Sciatic nerve (tissue), 2 donors: ENCODE measurements at regions of chr2 and their contacts with region 1.

Region 1: GRCh38 chr2:150466741-150467620 is 20.5 kb downstream of the RND3 start:
- DNase-seq: no peak
- ATAC-seq: peak; percentile 74

Region 2: GRCh38 chr2:150303281-150303680 is 163.7 kb before region 1 on chr2:
- intact Hi-C with region 1: no loop called
- DNase-seq: no peak
- ATAC-seq: no peak

Region 3: DNA sequence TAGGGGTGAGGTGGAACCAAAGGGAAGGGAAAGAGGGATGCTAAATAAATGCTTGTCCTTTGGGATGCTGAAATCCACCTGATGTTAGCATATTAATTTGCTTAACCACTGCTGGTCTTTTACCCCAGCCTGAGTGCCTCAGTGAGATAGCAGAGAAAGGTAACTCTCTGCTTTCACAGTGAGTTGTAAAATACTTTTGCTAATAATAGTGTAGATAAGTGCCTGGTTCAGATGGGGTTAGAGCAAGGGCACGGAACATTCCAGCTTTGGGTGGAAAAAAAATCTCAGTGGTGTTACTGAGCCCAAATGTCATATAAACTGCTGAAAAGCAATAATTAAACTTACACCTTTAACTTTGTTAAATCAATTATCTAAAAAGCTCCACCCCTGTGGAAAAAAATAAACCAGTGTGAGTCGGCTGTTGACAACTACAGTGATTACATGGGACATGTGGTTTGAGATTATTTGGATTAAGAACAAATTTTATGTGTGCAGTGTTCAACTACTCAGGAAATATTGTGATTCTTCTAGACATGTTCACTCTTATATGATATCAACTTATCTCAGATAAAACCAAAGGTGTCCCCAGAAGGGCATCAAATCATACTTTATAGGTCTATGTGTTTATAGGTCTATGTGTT is 41.6 kb after region 1 on chr2:
- intact Hi-C with region 1: loop called (anchors 2 kb)
- DNase-seq: no peak
- ATAC-seq: no peak

Region 4: DNA sequence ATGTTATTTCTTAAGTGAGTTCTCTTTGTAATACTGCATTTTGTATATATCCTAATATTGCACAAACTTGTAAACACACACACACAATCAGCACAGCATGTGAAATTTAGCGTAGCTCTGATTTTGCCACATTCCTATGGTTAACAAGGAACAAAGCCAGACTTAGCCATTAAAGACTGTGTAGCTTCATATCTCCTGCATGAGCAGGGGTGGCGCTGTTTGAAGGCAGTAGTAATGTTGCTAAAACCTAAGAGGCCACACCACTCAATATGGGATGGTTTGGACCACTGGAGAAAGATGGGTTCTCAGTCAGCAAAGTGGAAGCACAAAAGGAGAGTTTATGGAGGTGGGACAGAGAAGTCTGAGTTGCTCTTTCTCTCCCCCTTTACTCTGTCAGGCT is 81.5 kb after region 1 on chr2:
- intact Hi-C with region 1: no loop called
- DNase-seq: no peak
- ATAC-seq: no peak